ENCODE measurements at regions of chr5 and their contacts with region 1.

Region 1: DNA sequence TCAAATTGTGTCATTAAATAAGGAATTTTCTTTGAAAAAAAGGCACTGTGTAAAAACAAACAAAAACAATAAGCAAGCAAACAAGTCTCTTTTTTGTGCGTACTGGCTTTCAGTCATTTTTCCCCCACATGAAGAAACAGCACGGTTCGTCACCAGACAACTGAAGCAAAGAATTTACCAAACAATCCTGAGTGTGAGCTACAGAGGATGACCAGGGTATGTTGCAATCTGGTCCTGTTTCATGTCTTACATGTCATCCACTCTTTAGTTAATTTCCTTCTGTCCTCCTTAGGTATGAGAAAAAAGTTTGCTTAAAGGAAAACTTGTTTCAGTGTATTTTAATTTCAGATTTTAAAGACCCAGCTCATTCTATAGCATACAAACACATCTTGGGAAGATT is 1080.7 kb upstream of the NUDT12 start:
- DNase-seq: no peak
- H3K4me3 ChIP-seq: no peak overlapping the region
- H3K27ac ChIP-seq: peak overlapping the region in 3 of 4 donors; percentile 12 to 63 (median 29)
- H3K4me1 ChIP-seq: peaks cover 0 to 55% (median 36%) of the 10 kb centered on the region in 4 donors
- H3K27me3 ChIP-seq: no peaks in the 10 kb centered on the region
- CTCF ChIP-seq: no peak
- EP300 ChIP-seq: peak in 2 of 4 donors; percentile 48 to 84
- POLR2A ChIP-seq: no peak

Region 2: DNA sequence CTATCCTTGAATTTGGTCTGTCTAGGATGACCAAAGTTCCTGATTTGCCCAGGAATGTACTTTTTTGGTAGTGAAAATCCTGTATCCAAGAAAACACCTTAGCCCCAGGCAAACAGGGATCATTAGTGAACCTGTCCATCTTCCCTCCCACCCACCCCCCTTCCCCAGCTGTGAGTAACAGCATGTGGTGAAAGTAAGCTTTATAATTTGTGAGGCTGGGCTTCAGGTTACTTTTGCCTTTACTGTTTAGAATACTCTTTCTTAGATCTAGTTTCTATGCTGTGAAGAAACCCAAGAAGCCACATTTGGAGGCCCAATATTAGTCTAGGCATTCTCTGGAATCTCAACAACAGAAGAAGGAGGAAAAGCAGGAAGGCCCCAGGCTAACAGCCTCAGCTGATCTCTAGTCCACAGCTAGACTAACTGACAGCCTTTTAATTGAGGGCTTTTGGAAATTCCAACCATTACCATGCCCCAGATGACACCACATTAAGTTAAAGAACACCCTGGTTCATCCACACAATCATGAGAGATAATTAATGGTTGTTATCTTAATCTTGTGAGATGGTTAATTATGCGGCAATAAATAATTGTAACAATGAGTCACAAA is 377.7 kb before region 1 on chr5:
- intact Hi-C with region 1: no loop called
- DNase-seq: no peak
- H3K4me3 ChIP-seq: no peak overlapping the region
- H3K27ac ChIP-seq: no peak overlapping the region
- H3K4me1 ChIP-seq: no peaks in the 10 kb centered on the region
- H3K27me3 ChIP-seq: no peaks in the 10 kb centered on the region
- CTCF ChIP-seq: no peak
- EP300 ChIP-seq: no peak
- POLR2A ChIP-seq: no peak

Region 3: GRCh38 chr5:104540448-104540847 is 102.9 kb before region 1 on chr5:
- intact Hi-C with region 1: loop called (anchors 5 kb)
- DNase-seq: no peak
- H3K4me3 ChIP-seq: no peak overlapping the region
- H3K27ac ChIP-seq: peak overlapping the region in 3 of 4 donors; percentile 54 to 74 (median 72)
- H3K4me1 ChIP-seq: peaks cover 0 to 53% (median 20%) of the 10 kb centered on the region in 4 donors
- H3K27me3 ChIP-seq: no peaks in the 10 kb centered on the region
- CTCF ChIP-seq: no peak
- EP300 ChIP-seq: no peak
- POLR2A ChIP-seq: no peak

Region 4: GRCh38 chr5:104734046-104734445 is 90.7 kb after region 1 on chr5:
- intact Hi-C with region 1: loop called (anchors 10 kb)
- DNase-seq: no peak
- H3K4me3 ChIP-seq: no peak overlapping the region
- H3K27ac ChIP-seq: peak overlapping the region in 2 of 4 donors; percentile 37 to 60
- H3K4me1 ChIP-seq: peaks cover 0 to 38% (median 17%) of the 10 kb centered on the region in 4 donors
- H3K27me3 ChIP-seq: no peaks in the 10 kb centered on the region
- CTCF ChIP-seq: no peak
- EP300 ChIP-seq: no peak
- POLR2A ChIP-seq: no peak